ENCODE measurements at regions of chr10 and their contacts with region 1.

Region 1: DNA sequence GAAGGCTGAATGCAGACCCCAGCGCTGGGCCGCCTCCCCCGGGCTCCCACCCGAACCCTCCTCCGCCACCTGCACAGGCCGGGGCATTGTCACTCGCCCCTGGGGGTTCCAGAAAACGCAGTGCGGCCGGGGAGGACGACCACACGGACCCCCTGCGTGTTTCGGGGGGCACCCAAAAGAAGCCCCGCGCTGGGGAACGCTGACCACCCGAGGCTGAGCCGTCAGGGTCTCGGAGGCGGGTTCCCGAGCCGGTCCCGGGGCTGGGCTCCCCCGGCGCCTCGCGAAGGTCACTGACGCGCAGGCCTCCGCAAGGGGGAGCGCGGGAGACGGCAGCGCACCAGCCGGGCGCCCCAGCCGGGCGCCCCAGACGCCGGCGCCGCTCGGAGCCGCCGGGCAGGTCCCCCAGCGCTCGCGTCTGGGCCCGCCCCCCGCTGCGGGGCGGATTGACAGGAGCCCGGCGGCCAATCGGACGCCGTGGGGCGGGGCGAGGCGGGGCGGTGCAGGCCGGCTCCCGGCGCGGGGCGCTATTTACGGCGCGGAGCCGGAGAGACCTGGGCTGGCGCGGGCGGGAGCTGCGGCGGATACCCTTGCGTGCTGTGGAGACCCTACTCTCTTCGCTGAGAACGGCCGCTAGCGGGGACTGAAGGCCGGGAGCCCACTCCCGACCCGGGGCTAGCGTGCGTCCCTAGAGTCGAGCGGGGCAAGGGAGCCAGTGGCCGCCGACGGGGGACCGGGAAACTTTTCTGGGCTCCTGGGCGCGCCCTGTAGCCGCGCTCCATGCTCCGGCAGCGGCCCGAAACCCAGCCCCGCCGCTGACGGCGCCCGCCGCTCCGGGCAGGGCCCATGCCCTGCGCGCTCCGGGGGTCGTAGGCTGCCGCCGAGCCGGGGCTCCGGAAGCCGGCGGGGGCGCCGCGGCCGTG is at the start of gene BAMBI:
- DNase-seq: peak; percentile 95
- ATAC-seq: peak; percentile 99
- H3K4me3 Mint-ChIP-seq: peak within 1 kb of the TSS; percentile 68
- H3K27ac Mint-ChIP-seq: no peak within 1 kb of the TSS
- H3K4me1 Mint-ChIP-seq: peaks cover 31% of the 10 kb centered on the region
- H3K27me3 Mint-ChIP-seq: peaks cover 50% of the 10 kb centered on the region
- total RNA-seq, gene BAMBI: 0.09 to 0.16 TPM

Region 2: DNA sequence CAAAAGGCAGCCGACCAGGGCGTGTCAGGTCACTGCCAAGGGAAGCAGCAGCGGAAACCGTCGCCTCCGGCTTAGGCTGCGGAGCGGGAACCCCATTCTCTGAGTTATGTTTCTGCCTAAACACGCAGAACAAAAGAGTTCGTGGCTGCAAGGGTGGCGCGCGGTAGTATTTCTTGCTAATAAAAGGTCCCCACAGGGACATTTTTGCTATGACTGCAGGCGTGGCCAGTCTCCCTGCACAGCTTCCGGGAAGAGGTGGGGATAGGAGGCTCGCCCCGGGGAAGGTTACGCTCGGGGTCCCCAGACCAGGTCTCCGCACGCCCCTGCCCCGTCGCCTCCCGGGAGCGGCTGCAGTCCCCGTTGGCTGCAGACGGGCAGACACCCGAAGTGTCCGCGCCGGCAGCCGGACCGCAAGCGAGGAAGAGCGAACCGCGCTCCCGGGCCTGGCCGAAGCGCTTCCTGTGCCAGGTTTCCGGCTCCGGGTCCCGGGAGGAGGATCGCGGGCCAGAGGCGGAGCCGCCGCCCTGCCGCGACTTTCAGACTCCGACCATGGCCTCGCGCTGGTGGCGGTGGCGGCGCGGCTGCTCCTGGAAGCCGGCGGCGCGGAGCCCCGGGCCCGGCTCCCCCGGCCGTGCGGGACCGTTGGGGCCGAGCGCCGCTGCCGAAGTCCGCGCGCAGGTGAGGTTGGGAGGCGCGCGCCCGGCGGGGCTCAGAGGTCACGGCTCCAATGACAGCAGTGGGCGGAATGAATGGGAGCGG is 1979.9 kb before region 1 on chr10 and contains the start of gene PDSS1:
- CTCF ChIA-PET with region 1: no interaction called
- POLR2A ChIA-PET with region 1: no interaction called
- intact Hi-C with region 1: loop called in 1 of 2 experiments (anchors 5 kb)
- DNase-seq: peak; percentile 79
- ATAC-seq: peak; percentile 78
- H3K4me3 Mint-ChIP-seq: peak within 1 kb of the TSS; percentile 91
- H3K27ac Mint-ChIP-seq: peak within 1 kb of the TSS; percentile 95
- H3K4me1 Mint-ChIP-seq: peaks cover 32% of the 10 kb centered on the region
- H3K27me3 Mint-ChIP-seq: no peaks in the 10 kb centered on the region
- total RNA-seq, gene PDSS1: 16.1 to 20.7 TPM

Region 3: GRCh38 chr10:28190196-28190595 is 487.0 kb before region 1 on chr10:
- CTCF ChIA-PET with region 1: no interaction called
- POLR2A ChIA-PET with region 1: no interaction called
- intact Hi-C with region 1: no loop called
- DNase-seq: no peak
- ATAC-seq: no peak
- H3K4me3 Mint-ChIP-seq: no peak overlapping the region
- H3K27ac Mint-ChIP-seq: no peak overlapping the region
- H3K4me1 Mint-ChIP-seq: peaks cover 25% of the 10 kb centered on the region
- H3K27me3 Mint-ChIP-seq: no peaks in the 10 kb centered on the region

Region 4: DNA sequence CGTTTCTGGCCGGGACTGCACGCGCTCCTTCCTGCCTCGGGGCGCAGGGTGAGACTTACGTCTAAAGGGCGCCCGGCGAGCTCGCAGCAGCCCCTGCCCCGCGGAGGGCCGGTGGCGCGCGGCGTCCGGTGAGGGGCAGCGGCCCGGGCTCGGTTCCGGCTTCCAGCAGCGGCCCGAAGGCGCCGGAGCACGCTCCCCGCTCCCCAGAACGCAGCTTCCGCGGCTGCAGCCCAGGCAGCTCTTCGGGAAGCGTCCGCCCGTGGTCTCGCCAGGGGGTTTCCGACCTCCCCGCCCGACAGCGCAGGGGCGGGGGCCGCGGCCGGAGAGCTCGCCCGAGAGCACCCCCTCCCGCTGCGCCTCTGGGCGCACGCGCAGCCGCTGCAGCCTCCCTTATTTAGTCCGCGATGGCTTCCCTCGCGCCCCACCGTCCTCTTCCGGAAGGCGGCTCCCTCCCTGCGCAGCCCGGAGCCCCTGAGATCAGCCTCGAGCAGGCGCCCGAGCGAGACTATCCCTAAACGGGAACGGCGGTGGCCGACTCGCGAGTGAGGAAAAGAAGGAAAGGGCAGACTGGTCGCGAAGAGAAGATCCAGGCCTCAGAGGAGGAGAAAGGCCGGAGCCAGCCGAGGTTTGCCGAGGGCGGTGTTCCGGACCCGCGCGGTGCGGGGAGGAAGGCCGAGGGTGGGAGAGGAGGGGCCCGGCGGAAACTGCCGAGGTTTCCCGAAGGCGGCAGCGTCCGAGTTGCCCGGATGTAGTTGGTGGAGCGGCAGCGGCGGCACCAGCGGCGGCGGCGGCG is 144.6 kb before region 1 on chr10 and contains the start of gene WAC:
- CTCF ChIA-PET with region 1: no interaction called
- POLR2A ChIA-PET with region 1: no interaction called
- intact Hi-C with region 1: loop called in 1 of 2 experiments (anchors 1 kb)
- DNase-seq: peak; percentile 99
- ATAC-seq: peak; percentile 88
- H3K4me3 Mint-ChIP-seq: peak within 1 kb of the TSS; percentile 95
- H3K27ac Mint-ChIP-seq: peak within 1 kb of the TSS; percentile 100
- H3K4me1 Mint-ChIP-seq: peaks cover 56% of the 10 kb centered on the region
- H3K27me3 Mint-ChIP-seq: no peaks in the 10 kb centered on the region
- total RNA-seq, gene WAC: 103 to 136 TPM

Region 5: DNA sequence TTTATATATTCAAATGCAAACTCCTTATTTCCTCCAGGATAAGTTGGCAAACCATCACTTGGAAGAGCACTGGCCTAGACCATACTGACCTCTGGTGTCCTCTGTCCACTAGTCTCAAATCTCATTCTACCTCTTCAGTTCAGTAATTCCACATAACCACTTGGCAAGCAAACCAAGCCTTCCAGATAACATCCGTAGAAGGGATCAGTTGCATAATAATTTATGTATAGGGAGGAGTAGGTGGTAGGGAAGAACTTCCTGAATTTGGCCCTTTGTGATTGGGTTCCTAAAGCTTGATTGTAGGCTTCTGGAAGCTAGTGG is 89.3 kb before region 1 on chr10:
- CTCF ChIA-PET with region 1: no interaction called
- POLR2A ChIA-PET with region 1: no interaction called
- intact Hi-C with region 1: no loop called
- DNase-seq: no peak
- ATAC-seq: no peak
- H3K4me3 Mint-ChIP-seq: no peak overlapping the region
- H3K27ac Mint-ChIP-seq: no peak overlapping the region
- H3K4me1 Mint-ChIP-seq: peaks cover 41% of the 10 kb centered on the region
- H3K27me3 Mint-ChIP-seq: no peaks in the 10 kb centered on the region

Region 6: DNA sequence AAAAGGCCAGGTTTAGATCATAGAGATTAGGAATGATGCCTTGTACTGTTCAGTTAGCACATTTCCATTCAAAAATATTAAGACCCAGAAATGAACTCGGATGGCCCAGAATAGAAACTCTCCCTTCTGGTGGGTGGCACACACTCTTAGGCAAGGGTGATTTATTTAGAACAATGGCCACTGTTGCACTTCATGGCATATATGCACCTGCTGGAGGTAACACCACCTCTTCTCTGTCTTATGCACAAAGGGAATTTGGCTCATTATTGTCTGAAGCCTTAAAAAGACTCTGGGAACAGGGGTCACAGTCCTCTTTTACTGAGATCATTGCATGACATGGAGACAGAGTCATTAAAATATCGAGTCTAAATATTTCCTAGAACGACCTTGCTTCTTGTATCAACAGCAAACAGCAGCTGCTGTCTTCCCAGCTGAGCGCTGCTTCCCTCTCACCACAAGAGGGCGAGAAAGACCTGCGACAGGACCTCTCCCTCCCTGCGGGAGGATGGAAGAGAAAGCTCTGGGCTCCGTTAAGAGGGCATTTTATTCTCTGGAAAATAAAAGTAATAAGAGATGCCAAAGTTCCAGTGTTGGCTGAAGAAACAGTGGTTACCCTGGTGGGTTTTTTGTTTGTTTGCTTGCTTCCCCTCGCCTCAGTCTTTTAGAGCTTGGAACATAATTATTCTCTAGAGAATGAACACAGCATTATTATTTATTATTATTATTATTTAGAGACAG is 13.5 kb before region 1 on chr10:
- CTCF ChIA-PET with region 1: interaction called, 11 read pairs
- POLR2A ChIA-PET with region 1: no interaction called
- intact Hi-C with region 1: loop called in 1 of 2 experiments (anchors 1 kb)
- DNase-seq: peak; percentile 82
- ATAC-seq: peak; percentile 75
- H3K4me3 Mint-ChIP-seq: no peak overlapping the region
- H3K27ac Mint-ChIP-seq: no peak overlapping the region
- H3K4me1 Mint-ChIP-seq: peaks cover 7% of the 10 kb centered on the region
- H3K27me3 Mint-ChIP-seq: peaks cover 33% of the 10 kb centered on the region

Region 7: DNA sequence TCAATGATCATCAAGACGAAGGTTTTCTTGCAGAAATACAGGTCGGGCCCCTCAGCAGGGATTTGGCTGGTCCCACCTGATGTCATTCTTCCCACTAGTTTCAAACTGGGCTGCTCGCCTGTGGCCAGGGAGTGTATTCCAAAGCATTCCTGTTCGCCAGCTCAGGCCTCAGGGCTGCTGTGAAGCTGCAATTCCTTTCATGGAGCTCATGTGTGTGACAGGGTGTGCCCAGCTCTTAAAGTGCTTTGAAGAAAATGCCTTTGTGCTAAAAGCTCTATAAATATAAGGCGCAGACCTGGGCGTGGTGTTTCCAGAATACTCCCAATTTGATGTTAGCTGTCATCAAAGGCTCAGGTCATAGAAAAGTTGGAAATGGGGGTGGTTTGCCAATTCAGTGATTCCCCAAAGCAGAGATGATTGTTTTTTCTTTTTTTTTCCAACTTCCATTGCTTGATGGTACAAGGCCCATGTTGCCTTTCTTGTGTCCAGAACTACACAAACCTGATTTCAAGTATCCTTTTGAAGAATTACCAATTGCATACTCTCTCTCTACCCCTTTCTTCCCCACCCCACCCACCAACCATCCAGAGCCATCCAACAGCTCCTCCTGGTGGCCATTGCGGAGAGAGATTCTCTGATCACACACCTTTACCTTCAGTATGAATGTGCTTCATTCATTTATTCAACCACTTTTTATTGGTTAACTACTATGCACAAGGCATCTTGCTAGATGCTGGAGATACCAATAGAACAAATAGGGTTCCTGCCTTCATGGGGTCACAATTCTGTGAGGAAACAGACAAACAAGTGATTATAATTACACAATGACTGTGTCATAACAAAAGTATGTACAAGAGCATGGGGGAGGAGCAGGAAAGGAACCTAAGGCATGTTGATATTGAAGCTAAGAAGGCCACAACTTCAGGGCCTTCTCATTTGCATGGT is 314.4 kb after region 1 on chr10:
- CTCF ChIA-PET with region 1: no interaction called
- POLR2A ChIA-PET with region 1: no interaction called
- intact Hi-C with region 1: loop called (anchors 1 to 5 kb)
- DNase-seq: peak; percentile 66
- ATAC-seq: peak; percentile 42
- H3K4me3 Mint-ChIP-seq: no peak overlapping the region
- H3K27ac Mint-ChIP-seq: no peak overlapping the region
- H3K4me1 Mint-ChIP-seq: peaks cover 5% of the 10 kb centered on the region
- H3K27me3 Mint-ChIP-seq: peaks cover 10% of the 10 kb centered on the region

Region 8: DNA sequence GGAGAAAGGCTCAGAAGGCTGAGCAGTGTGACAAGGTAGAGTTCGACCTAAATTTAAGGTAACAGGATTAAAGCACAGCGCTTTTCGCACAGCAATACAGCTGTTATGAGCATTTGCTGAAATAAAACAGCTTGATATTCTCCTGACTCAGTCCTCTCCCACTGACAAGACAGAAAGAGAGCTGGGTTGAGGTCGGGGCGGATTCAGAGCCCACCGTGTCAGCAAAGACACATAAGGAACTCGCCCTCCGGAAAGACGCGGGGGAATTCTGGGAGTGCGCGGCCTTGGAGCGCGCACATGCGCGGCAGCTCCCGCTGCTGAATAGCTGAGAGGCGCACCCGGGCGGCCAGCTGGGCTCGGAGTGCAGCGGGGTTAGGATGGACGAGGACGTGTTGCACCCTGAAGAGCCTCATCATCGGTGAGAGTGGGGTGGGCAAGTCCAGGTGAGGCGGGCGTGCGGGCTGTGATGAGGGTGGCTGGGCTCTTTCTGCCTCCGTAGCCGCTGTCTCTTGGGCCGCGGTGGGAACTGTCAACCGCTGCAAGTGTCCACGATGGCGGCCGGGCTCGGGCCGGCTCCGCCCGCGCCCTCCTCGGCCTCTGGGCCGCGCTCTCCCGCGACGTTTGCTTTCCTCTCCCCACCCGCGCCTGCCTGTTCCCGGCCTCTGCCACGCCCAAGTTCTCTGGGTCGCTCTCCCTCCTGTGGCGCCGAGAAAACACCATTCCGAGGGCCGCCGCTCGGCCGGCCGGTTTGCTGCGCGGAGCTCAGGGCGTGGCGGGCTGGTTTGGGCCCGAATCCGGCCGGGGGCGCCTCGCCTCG is 732.2 kb after region 1 on chr10:
- CTCF ChIA-PET with region 1: no interaction called
- POLR2A ChIA-PET with region 1: no interaction called
- intact Hi-C with region 1: loop called in 1 of 2 experiments (anchors 5 kb)
- DNase-seq: peak; percentile 64
- ATAC-seq: peak; percentile 63
- H3K4me3 Mint-ChIP-seq: peak overlapping the region; percentile 96
- H3K27ac Mint-ChIP-seq: peak overlapping the region; percentile 92
- H3K4me1 Mint-ChIP-seq: peaks cover 33% of the 10 kb centered on the region
- H3K27me3 Mint-ChIP-seq: no peaks in the 10 kb centered on the region

Region 9: DNA sequence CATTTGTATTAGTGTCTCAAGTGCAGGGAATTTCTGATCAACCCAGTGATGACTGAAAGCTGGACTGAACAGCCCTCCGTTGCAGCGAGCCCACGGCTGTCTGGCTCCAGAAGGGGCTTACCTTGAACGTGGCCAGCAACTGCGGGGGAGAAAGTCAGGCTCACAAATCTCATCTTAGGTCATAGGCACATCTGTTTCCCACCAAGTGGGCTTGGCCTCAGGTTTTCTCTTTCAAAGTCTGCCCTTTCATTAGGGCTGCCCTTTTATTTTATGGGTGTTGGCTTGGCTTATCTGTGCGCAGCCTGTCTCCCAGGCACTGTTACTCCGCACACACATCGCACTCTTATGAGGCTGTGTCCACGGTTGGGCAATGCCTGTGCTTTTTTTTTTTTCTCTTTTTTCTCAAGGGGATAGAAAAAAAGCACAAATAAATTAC is 1204.1 kb after region 1 on chr10:
- CTCF ChIA-PET with region 1: no interaction called
- POLR2A ChIA-PET with region 1: no interaction called
- intact Hi-C with region 1: no loop called
- DNase-seq: no peak
- ATAC-seq: no peak
- H3K4me3 Mint-ChIP-seq: no peak overlapping the region
- H3K27ac Mint-ChIP-seq: no peak overlapping the region
- H3K4me1 Mint-ChIP-seq: no peaks in the 10 kb centered on the region
- H3K27me3 Mint-ChIP-seq: peaks cover 12% of the 10 kb centered on the region